Panc1 (cell line): ENCODE measurements at regions of chr18 and their contacts with region 1.

Region 1: GRCh38 chr18:24754572-24754971 is 294.1 kb downstream of the HRH4 start:
- DNase-seq: no peak
- ATAC-seq: no peak
- H3K4me3 ChIP-seq: no peak overlapping the region
- H3K27ac ChIP-seq: no peak overlapping the region
- H3K4me1 ChIP-seq: no peaks in the 10 kb centered on the region
- H3K27me3 ChIP-seq: no peaks in the 10 kb centered on the region
- CTCF ChIP-seq: no peak

Region 2: DNA sequence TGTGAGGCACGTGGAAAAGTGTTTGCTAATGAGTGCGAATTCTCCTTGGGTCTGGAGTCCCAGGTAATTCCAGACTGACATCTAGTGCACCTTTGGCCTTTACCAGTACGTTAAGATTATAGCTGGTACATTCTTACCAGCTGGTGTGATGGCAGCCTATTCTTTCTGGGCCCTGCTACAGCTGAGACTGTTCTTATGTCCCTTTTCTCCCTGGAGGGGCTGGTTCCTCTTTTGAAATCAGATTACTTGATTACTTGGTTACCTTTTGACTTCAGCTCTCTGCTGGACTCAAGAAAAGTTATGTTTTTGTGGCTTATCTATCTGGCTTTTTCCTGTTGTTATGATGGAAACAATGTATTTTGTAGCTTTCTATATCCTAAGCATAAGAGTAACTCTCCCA is 601.2 kb before region 1 on chr18:
- CTCF ChIA-PET with region 1: no interaction called
- POLR2A ChIA-PET with region 1: no interaction called
- in situ Hi-C with region 1: no loop called
- intact Hi-C with region 1: no loop called
- DNase-seq: no peak
- ATAC-seq: no peak
- H3K4me3 ChIP-seq: no peak overlapping the region
- H3K27ac ChIP-seq: no peak overlapping the region
- H3K4me1 ChIP-seq: no peaks in the 10 kb centered on the region
- H3K27me3 ChIP-seq: no peaks in the 10 kb centered on the region
- CTCF ChIP-seq: no peak

Region 3: DNA sequence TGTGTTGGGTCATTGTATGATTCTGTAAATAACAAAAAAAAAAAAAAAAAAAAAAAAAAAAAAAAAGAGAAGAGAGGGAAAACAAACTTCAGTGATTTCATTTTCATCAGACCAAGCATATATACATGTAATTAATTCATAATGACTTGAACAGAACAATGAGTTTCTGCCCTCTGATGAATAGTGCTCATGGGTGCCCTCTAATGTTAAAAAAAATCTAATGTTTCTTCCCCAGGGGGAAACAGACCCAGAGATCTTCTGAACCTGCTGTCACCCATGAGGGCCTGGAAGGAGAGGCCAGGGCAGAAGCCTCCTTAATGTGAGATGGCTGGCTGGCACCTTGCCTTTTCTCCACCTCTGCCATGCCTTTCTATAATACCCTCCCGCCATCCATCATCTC is 308.1 kb after region 1 on chr18:
- CTCF ChIA-PET with region 1: no interaction called
- POLR2A ChIA-PET with region 1: no interaction called
- in situ Hi-C with region 1: no loop called
- intact Hi-C with region 1: loop called (anchors 10 kb)
- DNase-seq: no peak
- ATAC-seq: no peak
- H3K4me3 ChIP-seq: no peak overlapping the region
- H3K27ac ChIP-seq: no peak overlapping the region
- H3K4me1 ChIP-seq: no peaks in the 10 kb centered on the region
- H3K27me3 ChIP-seq: no peaks in the 10 kb centered on the region
- CTCF ChIP-seq: peak; percentile 36